Activated CD4-positive, alpha-beta T cell treated with anti-CD3 and anti-CD28 coated beads, Interleukin-2, amount 10 ng/mL, durations not matched to agents 7 days and 5 days (primary cell): ENCODE measurements at regions of chr18 and their contacts with region 1.

Region 1: GRCh38 chr18:36811430-36811829 is 17.4 kb downstream of the TPGS2 start:
- DNase-seq: no peak
- H3K4me3 Mint-ChIP-seq: no peak overlapping the region
- H3K27ac Mint-ChIP-seq: no peak overlapping the region
- H3K4me1 Mint-ChIP-seq: peaks cover 4% of the 10 kb centered on the region
- H3K27me3 Mint-ChIP-seq: no peaks in the 10 kb centered on the region

Region 2: GRCh38 chr18:36582988-36583745 is 228.3 kb before region 1 on chr18:
- CTCF ChIA-PET with region 1: no interaction called
- POLR2A ChIA-PET with region 1: no interaction called
- DNase-seq: no peak
- H3K4me3 Mint-ChIP-seq: no peak overlapping the region
- H3K27ac Mint-ChIP-seq: no peak overlapping the region
- H3K4me1 Mint-ChIP-seq: no peaks in the 10 kb centered on the region
- H3K27me3 Mint-ChIP-seq: no peaks in the 10 kb centered on the region

Region 3: DNA sequence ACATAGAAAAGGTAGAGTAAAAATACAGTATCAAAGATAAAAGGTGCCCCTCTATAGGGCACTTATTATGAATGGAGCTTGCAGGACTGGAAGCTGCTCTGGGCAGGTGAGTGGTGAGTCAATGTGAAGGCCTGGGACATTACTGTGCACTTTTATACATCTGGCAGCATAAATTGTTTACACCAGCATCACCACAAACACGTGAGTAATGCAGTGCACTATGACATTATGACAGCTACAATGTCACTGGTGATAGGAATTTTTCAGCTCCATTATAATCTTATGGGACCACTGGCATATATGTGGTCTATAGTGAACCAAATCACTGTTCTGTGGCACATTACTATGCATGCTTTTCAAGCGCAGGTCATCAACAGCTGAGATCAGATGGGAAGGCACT is 30.7 kb before region 1 on chr18:
- CTCF ChIA-PET with region 1: no interaction called
- POLR2A ChIA-PET with region 1: no interaction called
- DNase-seq: no peak
- H3K4me3 Mint-ChIP-seq: no peak overlapping the region
- H3K27ac Mint-ChIP-seq: no peak overlapping the region
- H3K4me1 Mint-ChIP-seq: no peaks in the 10 kb centered on the region
- H3K27me3 Mint-ChIP-seq: no peaks in the 10 kb centered on the region

Region 4: GRCh38 chr18:36828630-36829361 is 17.4 kb after region 1 on chr18 and contains the starts of genes KIAA1328 and TPGS2:
- CTCF ChIA-PET with region 1: interaction called, 12 read pairs
- POLR2A ChIA-PET with region 1: no interaction called
- DNase-seq: peak; percentile 88
- H3K4me3 Mint-ChIP-seq: peak within 1 kb of the TSS; percentile 96
- H3K27ac Mint-ChIP-seq: peak within 1 kb of the TSS; percentile 98
- H3K4me1 Mint-ChIP-seq: peaks cover 52% of the 10 kb centered on the region
- H3K27me3 Mint-ChIP-seq: no peaks in the 10 kb centered on the region
- total RNA-seq, gene KIAA1328: 7.0 to 8.1 TPM
- total RNA-seq, gene TPGS2: 125 to 158 TPM

Region 5: GRCh38 chr18:36917907-36918306 is 106.5 kb after region 1 on chr18:
- CTCF ChIA-PET with region 1: no interaction called
- POLR2A ChIA-PET with region 1: no interaction called
- DNase-seq: no peak
- H3K4me3 Mint-ChIP-seq: no peak overlapping the region
- H3K27ac Mint-ChIP-seq: no peak overlapping the region
- H3K4me1 Mint-ChIP-seq: peaks cover 9% of the 10 kb centered on the region
- H3K27me3 Mint-ChIP-seq: no peaks in the 10 kb centered on the region